Activated T-helper 1 cell treated with anti-CD3 and anti-CD28 coated beads, Interleukin-12 subunit alpha, Interleukin-12 subunit beta, Interleukin-2, Interleukin-4 antibody, amounts not matched to agents 30 ng/mL and 10 ng/mL and 1 ng/mL, durations not matched to agents 14 hours and 24 hours and 36 hours (primary cell): ENCODE measurements at regions of chr3 and their contacts with region 1.

Region 1: DNA sequence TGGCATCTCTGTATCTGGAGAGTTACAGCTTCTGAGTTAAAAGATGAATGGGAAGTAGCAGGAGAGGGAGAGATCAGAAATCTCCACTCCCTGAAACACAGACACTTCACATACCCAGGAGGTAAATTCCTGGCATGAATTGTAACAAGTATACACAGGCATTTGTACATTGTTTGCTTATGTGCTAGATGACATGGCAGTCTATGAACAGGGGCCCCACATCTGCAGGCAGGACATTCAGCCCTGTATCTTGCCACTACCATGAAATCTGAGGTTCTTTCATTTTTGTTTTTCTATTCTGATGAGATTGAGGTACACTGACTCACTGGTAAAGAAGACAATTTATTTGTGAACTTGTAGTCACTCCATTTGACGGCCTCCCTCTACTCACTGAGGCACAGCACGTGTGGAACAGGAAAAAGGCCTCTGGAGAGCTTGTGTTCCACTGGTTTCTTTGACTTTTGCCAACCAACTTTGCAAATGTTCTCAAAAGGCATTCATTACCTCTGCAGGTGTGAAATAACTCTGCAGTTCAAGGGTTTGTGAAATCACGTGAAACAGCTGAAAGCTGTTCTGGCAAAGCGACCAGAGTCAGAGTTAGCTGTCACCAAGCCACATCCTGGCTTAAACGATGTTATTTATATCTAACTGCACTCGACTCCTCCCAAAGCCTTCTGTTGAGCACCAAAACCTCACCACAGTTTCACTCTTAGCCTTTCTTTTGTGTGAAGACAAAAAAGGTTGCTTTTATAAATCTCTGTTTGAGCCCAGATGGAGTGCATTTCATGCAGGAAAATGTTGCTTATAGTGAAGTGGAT is 401.3 kb upstream of the CFAP20DC start:
- DNase-seq: peak; percentile 74
- H3K4me3 Mint-ChIP-seq: peak overlapping the region; percentile 65
- H3K27ac Mint-ChIP-seq: peak overlapping the region; percentile 97
- H3K4me1 Mint-ChIP-seq: peaks cover 81% of the 10 kb centered on the region
- H3K27me3 Mint-ChIP-seq: no peaks in the 10 kb centered on the region

Region 2: DNA sequence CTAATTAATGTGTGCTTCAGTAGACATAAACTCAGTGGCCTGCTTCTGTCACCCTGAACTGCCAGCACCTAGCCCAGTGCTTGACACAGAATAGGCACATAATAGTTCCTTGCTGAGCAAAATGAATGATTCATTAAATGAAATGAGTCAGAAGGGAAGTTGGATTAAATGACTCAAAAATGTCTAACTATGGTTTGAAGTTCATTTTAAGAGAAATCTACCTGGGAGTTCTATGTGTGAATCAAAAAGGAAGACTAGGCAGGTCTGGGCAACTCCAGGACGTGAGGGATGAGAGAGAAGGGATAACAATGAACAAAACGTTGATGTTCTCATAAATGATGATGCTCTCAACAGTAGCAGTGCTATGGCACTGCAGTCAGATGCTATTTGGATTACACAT is 576.4 kb before region 1 on chr3:
- intact Hi-C with region 1: loop called (anchors 10 kb)
- DNase-seq: no peak
- H3K4me3 Mint-ChIP-seq: no peak overlapping the region
- H3K27ac Mint-ChIP-seq: peak overlapping the region; percentile 65
- H3K4me1 Mint-ChIP-seq: peaks cover 14% of the 10 kb centered on the region
- H3K27me3 Mint-ChIP-seq: no peaks in the 10 kb centered on the region

Region 3: DNA sequence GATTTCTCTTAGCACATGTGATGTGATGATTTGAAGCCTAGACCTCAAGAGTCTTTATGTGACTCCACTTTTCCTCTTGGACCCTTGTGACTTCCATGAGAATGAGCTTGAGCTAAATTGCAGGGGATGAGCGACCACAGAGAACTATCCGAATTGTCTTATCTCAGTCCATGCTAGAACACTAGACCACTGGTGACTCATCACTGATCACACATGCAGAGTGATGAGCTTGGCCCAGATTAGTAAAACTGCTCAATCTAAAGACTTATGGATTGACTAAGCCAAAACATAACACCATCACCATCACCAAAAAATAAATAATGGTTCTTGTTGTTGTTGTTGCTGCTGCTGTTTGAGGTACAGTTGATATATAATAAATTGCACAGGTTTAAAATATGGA is 287.2 kb before region 1 on chr3:
- intact Hi-C with region 1: no loop called
- DNase-seq: no peak
- H3K4me3 Mint-ChIP-seq: no peak overlapping the region
- H3K27ac Mint-ChIP-seq: no peak overlapping the region
- H3K4me1 Mint-ChIP-seq: no peaks in the 10 kb centered on the region
- H3K27me3 Mint-ChIP-seq: peaks cover 11% of the 10 kb centered on the region

Region 4: GRCh38 chr3:59286791-59287531 is 164.2 kb before region 1 on chr3:
- intact Hi-C with region 1: loop called (anchors 1 kb)
- DNase-seq: peak; percentile 29
- H3K4me3 Mint-ChIP-seq: peak overlapping the region; percentile 1
- H3K27ac Mint-ChIP-seq: peak overlapping the region; percentile 91
- H3K4me1 Mint-ChIP-seq: peaks cover 37% of the 10 kb centered on the region
- H3K27me3 Mint-ChIP-seq: no peaks in the 10 kb centered on the region

Region 5: GRCh38 chr3:59469948-59470723 is 19.0 kb after region 1 on chr3:
- intact Hi-C with region 1: loop called (anchors 1 kb)
- DNase-seq: no peak
- H3K4me3 Mint-ChIP-seq: no peak overlapping the region
- H3K27ac Mint-ChIP-seq: peak overlapping the region; percentile 64
- H3K4me1 Mint-ChIP-seq: peaks cover 38% of the 10 kb centered on the region
- H3K27me3 Mint-ChIP-seq: no peaks in the 10 kb centered on the region

Region 6: DNA sequence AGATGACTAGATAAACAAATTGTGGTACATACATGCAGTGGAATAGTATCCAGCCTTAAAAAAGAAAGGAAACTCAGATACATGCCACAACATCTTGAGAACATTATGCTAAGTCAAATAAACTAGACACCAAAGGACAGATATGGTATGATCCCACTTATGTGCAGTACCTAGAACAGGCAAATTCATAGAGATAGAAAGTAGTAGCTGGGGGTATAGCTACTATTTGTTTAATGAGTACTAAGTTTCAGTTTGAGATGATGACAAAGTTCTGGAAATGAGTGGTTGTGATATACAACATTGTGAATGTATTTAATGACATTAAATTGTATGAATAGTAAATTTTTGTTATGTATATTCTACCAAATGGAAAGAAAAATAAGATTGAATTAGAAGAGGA is 75.8 kb after region 1 on chr3:
- intact Hi-C with region 1: loop called (anchors 2 kb)
- DNase-seq: no peak
- H3K4me3 Mint-ChIP-seq: no peak overlapping the region
- H3K27ac Mint-ChIP-seq: peak overlapping the region; percentile 19
- H3K4me1 Mint-ChIP-seq: peaks cover 9% of the 10 kb centered on the region
- H3K27me3 Mint-ChIP-seq: no peaks in the 10 kb centered on the region

Region 7: GRCh38 chr3:59759298-59760031 is 308.3 kb after region 1 on chr3:
- intact Hi-C with region 1: loop called (anchors 10 kb)
- DNase-seq: no peak
- H3K4me3 Mint-ChIP-seq: peak overlapping the region; percentile 32
- H3K27ac Mint-ChIP-seq: no peak overlapping the region
- H3K4me1 Mint-ChIP-seq: peaks cover 67% of the 10 kb centered on the region
- H3K27me3 Mint-ChIP-seq: no peaks in the 10 kb centered on the region

Region 8: DNA sequence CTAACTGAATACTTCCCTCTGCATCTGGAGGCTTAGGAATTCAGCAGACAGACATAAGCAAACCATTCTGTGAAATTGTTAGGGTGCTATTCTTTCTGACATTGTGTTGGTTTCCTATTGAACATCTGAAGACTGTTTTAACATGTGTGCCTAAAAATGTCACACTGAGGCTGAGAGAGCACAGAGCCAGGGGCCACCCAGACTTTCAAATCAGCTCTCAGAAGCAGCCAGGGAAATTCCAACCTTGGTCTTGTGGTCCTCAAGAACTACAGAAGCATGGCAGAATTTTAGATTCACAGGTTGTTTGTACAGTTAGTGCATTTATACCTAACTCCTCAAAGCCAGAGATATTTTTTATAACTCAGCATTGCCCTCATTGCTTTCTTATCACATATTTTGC is 527.8 kb after region 1 on chr3:
- intact Hi-C with region 1: loop called (anchors 1 kb)
- DNase-seq: peak; percentile 38
- H3K4me3 Mint-ChIP-seq: peak overlapping the region; percentile 64
- H3K27ac Mint-ChIP-seq: peak overlapping the region; percentile 93
- H3K4me1 Mint-ChIP-seq: peaks cover 45% of the 10 kb centered on the region
- H3K27me3 Mint-ChIP-seq: no peaks in the 10 kb centered on the region